ENCODE measurements at regions of chrX and their contacts with region 1.

Region 1: DNA sequence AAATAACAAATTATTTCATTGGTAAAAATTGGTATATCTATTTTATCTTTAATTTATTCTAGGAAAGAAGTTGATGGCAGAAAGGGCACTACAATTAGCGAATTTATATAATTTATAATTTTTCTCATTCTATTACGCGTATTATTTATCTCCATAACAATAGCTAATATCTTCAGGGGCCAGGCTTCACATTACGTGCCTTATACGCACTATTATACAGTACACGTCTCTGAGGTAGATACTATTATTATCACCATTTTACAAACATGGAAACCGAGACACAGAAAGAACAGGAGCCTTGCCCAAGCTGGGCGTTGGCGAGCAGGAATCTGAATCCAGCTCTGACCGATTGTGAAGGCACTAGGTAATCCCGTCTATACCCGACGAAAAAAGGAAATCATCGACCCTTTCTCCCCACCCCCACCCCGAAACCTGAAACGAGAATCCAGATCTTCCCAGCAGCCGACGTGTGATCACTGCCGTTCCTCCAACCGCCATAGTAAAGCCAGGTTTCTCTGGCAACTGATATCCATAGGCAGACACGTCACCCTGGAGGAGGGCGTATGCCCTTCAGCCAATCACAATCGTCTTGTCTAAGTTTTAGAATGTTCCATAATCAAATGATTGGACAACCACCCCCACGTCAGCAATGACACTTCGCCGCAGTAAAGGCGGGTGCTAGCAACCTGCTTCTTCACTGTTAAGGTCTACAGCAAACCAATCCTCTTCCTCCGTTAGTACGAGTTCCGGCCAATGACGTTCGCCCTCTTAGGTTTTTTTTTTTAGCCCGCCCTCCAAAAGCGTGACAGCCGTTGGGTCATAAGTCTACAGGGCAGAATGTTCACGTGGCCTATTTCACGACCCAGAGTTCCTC is at the start of gene MORF4L2:
- DNase-seq: peak; percentile 94 to 96
- H3K4me3 ChIP-seq: peak within 1 kb of the TSS; percentile 64 to 69
- H3K27ac ChIP-seq: peak within 1 kb of the TSS; percentile 93 to 97
- H3K4me1 ChIP-seq: peaks cover 0 to 21% (median 1%) of the 10 kb centered on the region in 4 donors
- H3K27me3 ChIP-seq: no peaks in the 10 kb centered on the region
- CTCF ChIP-seq: no peak

Region 2: GRCh38 chrX:102599084-102599950 is 1087.1 kb before region 1 on chrX and contains the start of gene ARMCX5:
- intact Hi-C with region 1: loop called (anchors 5 kb)
- DNase-seq: peak; percentile 66 to 80
- H3K4me3 ChIP-seq: peak within 1 kb of the TSS; percentile 65 to 66
- H3K27ac ChIP-seq: peak within 1 kb of the TSS; percentile 82 to 85
- H3K4me1 ChIP-seq: peaks cover 0 to 7% (median 2%) of the 10 kb centered on the region in 4 donors
- H3K27me3 ChIP-seq: no peaks in the 10 kb centered on the region
- CTCF ChIP-seq: peak in 1 of 2 experiments; percentile 28

Region 3: DNA sequence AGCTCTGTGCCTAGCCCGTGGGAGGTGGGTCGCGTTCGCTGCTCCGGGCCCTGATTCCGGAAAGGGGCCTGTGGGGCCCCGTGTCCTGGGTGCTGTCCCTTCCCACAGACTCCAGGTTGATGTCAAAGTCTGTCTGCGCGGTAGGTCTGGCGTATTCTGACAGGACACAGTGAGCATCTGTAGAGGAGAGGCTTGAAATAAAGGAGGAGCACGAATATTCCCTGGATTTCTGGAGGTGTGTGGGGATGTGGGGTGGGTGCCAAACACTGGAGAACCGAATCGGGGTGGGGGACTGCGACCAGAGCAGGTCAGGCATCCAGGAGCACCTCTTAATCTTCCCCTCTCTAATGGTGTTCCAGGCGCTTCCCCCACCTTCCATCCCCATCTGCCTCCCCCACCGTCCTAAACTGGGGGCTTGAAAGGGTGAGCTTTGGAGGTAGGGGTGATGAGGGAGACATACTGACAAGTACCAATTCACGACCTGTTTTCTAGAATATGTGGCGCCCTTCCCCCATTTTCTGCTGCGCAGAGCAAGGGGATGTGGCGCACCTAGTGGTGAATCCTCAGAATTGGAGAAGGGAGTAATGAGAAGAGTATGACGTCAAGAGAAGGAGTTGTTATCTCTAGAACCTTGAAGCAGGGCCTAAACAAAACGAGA is 1034.3 kb before region 1 on chrX:
- intact Hi-C with region 1: loop called (anchors 5 kb)
- DNase-seq: peak; percentile 42 to 69
- H3K4me3 ChIP-seq: peak overlapping the region; percentile 66 to 69
- H3K27ac ChIP-seq: peak overlapping the region; percentile 80 to 82
- H3K4me1 ChIP-seq: peaks cover 0 to 12% (median 5%) of the 10 kb centered on the region in 4 donors
- H3K27me3 ChIP-seq: no peaks in the 10 kb centered on the region
- CTCF ChIP-seq: peak; percentile 48 to 53

Region 4: GRCh38 chrX:103276539-103277002 is 409.9 kb before region 1 on chrX and contains the start of gene TCEAL5:
- intact Hi-C with region 1: no loop called
- DNase-seq: no peak
- H3K4me3 ChIP-seq: peak within 1 kb of the TSS; percentile 14 to 33
- H3K27ac ChIP-seq: no peak within 1 kb of the TSS
- H3K4me1 ChIP-seq: peaks cover 0 to 6% (median 3%) of the 10 kb centered on the region in 4 donors
- H3K27me3 ChIP-seq: no peaks in the 10 kb centered on the region
- CTCF ChIP-seq: no peak

Region 5: GRCh38 chrX:103540145-103540544 is 146.3 kb before region 1 on chrX:
- intact Hi-C with region 1: loop called (anchors 5 kb)
- DNase-seq: no peak
- H3K4me3 ChIP-seq: no peak overlapping the region
- H3K27ac ChIP-seq: peak overlapping the region; percentile 77 to 82
- H3K4me1 ChIP-seq: peaks cover 0 to 56% (median 9%) of the 10 kb centered on the region in 4 donors
- H3K27me3 ChIP-seq: no peaks in the 10 kb centered on the region
- CTCF ChIP-seq: no peak

Region 6: GRCh38 chrX:103758555-103758954 is 72.1 kb after region 1 on chrX:
- intact Hi-C with region 1: no loop called
- DNase-seq: no peak
- H3K4me3 ChIP-seq: no peak overlapping the region
- H3K27ac ChIP-seq: no peak overlapping the region
- H3K4me1 ChIP-seq: no peaks in the 10 kb centered on the region
- H3K27me3 ChIP-seq: no peaks in the 10 kb centered on the region
- CTCF ChIP-seq: no peak

Region 7: DNA sequence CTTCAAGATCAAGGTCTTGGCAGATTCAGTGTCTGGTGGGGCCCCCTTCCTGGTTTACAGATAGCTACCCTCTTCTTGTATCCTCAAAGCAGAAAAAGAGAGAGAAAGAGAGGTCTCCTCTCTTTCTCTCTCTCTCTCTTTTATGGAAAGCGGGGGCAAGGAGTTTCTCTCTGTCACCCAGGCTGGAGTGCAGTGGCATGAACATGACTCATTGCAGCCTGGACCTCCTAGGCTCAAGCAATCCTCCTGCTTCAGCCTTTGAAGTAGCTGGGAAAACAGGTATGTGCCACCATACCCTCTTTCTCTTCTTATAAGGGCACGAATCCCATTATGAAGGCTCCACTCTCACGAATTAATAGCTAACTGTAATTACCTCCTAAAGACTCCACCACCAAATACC is 125.4 kb after region 1 on chrX:
- intact Hi-C with region 1: loop called (anchors 5 kb)
- DNase-seq: no peak
- H3K4me3 ChIP-seq: no peak overlapping the region
- H3K27ac ChIP-seq: no peak overlapping the region
- H3K4me1 ChIP-seq: no peaks in the 10 kb centered on the region
- H3K27me3 ChIP-seq: no peaks in the 10 kb centered on the region
- CTCF ChIP-seq: no peak

Measured in tibial artery (tissue), 4 donors.